ENCODE measurements at regions of chr1 and their contacts with region 1.

Region 1: DNA sequence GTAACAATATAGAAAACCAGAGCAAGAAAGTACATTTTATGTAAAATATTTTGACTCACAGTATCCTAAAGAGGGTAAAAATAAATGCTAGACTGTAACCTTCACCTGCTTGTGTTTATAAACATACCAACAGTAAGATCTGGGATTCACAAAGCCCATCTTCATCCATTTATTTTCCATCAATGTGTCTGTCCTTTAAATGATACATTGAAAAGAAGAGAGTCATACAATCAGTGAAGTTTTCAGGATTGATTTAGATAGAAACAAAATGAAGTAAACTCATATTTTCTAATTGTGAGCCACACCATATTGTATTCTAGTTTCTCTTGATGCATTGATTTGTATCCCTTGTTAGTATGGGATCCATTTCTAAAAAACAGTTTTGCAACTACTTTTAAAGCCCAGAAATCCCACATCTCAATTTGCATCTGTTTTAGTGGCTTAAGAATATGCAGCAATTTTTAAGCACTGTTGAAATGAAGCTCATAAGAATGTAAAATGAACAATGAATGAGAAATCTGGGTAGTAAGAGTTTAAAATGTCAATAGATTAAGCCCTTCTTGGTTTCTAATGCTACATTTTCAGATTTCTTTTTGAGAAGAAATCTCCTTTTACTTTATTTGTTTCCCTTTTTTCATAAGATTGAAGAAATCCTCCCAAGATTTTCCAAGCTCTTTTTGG is 548.1 kb upstream of the ADGRL2 start:
- DNase-seq: no peak
- H3K27ac ChIP-seq: no peak overlapping the region
- CTCF ChIP-seq: no peak

Region 2: DNA sequence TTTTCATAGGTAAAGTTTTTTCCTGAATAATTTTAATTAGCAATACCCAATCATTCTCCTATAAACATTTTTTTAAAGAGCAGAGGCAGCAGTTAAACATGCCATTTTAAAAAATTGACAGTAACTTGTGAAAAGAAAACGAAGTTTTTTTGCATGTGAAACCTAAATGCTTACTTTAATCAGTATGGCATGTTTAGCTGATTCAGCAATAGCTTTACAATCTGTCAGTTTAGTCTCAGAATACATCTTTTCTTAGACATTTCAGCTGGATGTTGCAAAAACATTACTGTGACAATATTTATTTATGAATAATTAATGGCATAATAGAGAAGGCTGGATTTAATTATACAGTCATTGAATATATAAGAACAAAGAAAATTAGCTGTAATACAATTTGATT is 584.2 kb before region 1 on chr1:
- CTCF ChIA-PET with region 1: no interaction called
- POLR2A ChIA-PET with region 1: interaction called, 14 read pairs
- DNase-seq: no peak
- H3K27ac ChIP-seq: no peak overlapping the region
- CTCF ChIP-seq: no peak

Measured in RWPE1 (cell line).